CD14-positive monocyte (primary cell): ENCODE measurements at regions of chr16 and their contacts with region 1.

Region 1: GRCh38 chr16:69520800-69521602 is 44.8 kb upstream of the NFAT5 start:
- DNase-seq: peak in 1 of 3 donors; percentile 34
- H3K4me3 ChIP-seq: no peak overlapping the region
- H3K4me3 Mint-ChIP-seq: peak overlapping the region in 1 of 2 donors; percentile 48
- H3K27ac ChIP-seq: no peak overlapping the region
- H3K27ac Mint-ChIP-seq: peak overlapping the region in 2 of 7 donors; percentile 14 to 46
- H3K4me1 ChIP-seq: peaks cover 0 to 7% of the 10 kb centered on the region in 2 donors
- H3K4me1 Mint-ChIP-seq: peaks cover 9% of the 10 kb centered on the region
- H3K27me3 ChIP-seq: peaks cover 14 to 16% of the 10 kb centered on the region in 2 donors
- H3K27me3 Mint-ChIP-seq: peaks cover 31 to 43% (median 33%) of the 10 kb centered on the region in 3 donors
- CTCF ChIP-seq: no peak

Region 2: DNA sequence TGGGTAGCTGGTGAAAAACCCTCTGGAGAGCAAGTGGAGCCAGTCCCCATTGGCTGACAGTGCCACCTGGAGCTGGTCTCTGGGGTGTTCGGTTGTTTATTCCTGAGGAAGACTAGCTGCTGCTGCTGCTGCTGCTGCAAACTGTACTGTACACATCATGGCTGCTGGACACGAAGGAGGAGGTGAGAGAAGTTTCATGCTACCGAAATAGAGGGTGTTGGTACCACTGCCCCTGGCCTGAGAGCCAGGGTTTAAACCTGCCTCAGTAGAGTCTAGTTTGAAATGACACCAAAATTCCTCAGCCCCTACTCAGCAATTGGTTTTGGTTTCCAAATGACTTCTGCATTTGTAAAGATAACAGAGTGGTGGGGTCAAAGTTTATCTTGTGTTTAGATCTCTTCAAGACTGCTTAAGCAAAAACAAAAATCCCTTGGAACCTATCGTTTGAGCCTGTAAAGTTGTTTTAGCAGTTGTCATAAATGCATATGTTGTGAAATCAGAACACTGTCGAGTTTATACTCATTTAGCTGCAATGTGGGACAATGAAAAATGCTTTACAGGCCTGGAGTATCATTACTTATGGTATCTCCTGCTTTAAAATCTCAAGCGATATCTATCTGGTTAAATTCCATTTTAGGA is 55.8 kb before region 1 on chr16:
- intact Hi-C with region 1: loop called in 1 of 2 experiments (anchors 10 kb)
- DNase-seq: no peak
- H3K4me3 ChIP-seq: no peak overlapping the region
- H3K4me3 Mint-ChIP-seq: peak overlapping the region in 1 of 2 donors; percentile 79
- H3K27ac ChIP-seq: no peak overlapping the region
- H3K27ac Mint-ChIP-seq: peak overlapping the region in 1 of 7 donors; percentile 54
- H3K4me1 ChIP-seq: peaks cover 11 to 17% of the 10 kb centered on the region in 2 donors
- H3K4me1 Mint-ChIP-seq: peaks cover 22% of the 10 kb centered on the region
- H3K27me3 ChIP-seq: peaks cover 72 to 84% of the 10 kb centered on the region in 2 donors
- H3K27me3 Mint-ChIP-seq: peaks cover 72 to 83% (median 72%) of the 10 kb centered on the region in 3 donors
- CTCF ChIP-seq: no peak